Head of caudate nucleus (tissue), 42 donors: ENCODE measurements at regions of chr17 and their contacts with region 1.

Region 1: GRCh38 chr17:17812211-17813057 is 24.4 kb downstream of the SREBF1 start:
- DNase-seq: peak in 41 of 42 donors; percentile 54 to 93 (median 76)

Region 2: GRCh38 chr17:17681187-17681848 is 131.1 kb before region 1 on chr17 and contains the start of gene RAI1:
- intact Hi-C with region 1: loop called (anchors 2 kb)
- DNase-seq: peak in 40 of 42 donors; percentile 55 to 89 (median 80)

Region 3: GRCh38 chr17:17859909-17860765 is 47.7 kb after region 1 on chr17:
- intact Hi-C with region 1: loop called (anchors 2 kb)
- DNase-seq: peak; percentile 50 to 92 (median 80)

Region 4: DNA sequence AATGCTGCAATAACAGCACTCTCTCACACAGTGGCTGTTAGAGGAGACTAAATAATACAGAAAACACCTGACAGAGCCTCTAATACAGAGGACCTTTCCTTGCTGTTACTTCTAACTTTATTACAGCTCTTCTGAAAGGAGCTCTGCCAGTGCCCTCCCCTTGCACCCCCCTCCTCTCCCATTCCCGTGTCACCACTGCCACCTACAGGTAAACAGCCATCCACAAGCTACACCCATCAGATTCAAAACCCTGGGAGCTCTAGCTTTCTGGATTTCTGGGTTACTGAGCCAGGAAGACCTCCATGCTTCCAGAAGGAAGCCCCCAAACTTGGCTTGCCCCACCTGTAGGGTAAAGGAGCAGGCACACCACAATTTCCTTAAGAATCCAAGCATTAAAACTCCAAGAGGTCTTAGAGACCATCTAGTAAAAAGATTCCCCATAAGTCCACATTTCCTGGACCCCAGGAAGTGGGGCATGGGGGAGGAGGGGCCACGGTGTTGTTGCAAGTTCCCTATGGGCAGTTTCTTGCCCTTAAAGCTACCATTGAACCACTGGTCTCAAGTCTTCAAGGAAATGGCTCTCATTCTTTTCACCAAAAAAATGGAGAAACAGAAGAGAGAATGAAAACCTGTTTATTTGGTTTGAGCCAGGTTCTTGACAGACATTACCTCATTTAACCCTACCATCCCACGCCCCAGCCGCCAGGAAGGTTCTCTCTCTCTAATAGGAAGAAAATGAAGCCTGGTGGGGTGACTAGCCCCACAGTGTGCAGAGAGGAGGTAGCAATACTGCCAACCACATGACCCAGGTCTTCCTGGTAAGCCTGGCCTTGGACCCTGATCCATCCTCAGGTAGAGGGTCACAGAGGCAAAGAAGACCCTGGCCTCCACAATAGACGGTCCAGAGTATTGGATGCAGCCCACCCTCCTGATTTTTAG is 107.0 kb after region 1 on chr17:
- intact Hi-C with region 1: loop called (anchors 5 kb)
- DNase-seq: peak; percentile 55 to 93 (median 81)

Region 5: GRCh38 chr17:18038861-18039534 is 226.6 kb after region 1 on chr17 and contains the starts of genes ATPAF2 and GID4:
- intact Hi-C with region 1: loop called (anchors 10 kb)
- DNase-seq: peak; percentile 98 to 100 (median 100)